PC-9 (cell line): ENCODE measurements at regions of chr9 and their contacts with region 1.

Region 1: GRCh38 chr9:12719431-12719830 is 26.2 kb downstream of the TYRP1 start:
- DNase-seq: no peak
- H3K4me3 ChIP-seq: no peak overlapping the region
- H3K27ac ChIP-seq: no peak overlapping the region
- H3K4me1 ChIP-seq: no peaks in the 10 kb centered on the region
- H3K27me3 ChIP-seq: no peaks in the 10 kb centered on the region
- CTCF ChIP-seq: peak; percentile 67

Region 2: GRCh38 chr9:12813960-12814876 is 94.8 kb after region 1 on chr9:
- CTCF ChIA-PET with region 1: interaction called, 6 read pairs
- POLR2A ChIA-PET with region 1: no interaction called
- intact Hi-C with region 1: loop called (anchors 5 kb)
- DNase-seq: peak; percentile 57 to 96
- H3K4me3 ChIP-seq: peak overlapping the region; percentile 38; the same call in 1 of the 2 replicates
- H3K27ac ChIP-seq: peak overlapping the region; percentile 100
- H3K4me1 ChIP-seq: peaks cover 33% of the 10 kb centered on the region
- H3K27me3 ChIP-seq: no peaks in the 10 kb centered on the region
- CTCF ChIP-seq: no peak

Region 3: DNA sequence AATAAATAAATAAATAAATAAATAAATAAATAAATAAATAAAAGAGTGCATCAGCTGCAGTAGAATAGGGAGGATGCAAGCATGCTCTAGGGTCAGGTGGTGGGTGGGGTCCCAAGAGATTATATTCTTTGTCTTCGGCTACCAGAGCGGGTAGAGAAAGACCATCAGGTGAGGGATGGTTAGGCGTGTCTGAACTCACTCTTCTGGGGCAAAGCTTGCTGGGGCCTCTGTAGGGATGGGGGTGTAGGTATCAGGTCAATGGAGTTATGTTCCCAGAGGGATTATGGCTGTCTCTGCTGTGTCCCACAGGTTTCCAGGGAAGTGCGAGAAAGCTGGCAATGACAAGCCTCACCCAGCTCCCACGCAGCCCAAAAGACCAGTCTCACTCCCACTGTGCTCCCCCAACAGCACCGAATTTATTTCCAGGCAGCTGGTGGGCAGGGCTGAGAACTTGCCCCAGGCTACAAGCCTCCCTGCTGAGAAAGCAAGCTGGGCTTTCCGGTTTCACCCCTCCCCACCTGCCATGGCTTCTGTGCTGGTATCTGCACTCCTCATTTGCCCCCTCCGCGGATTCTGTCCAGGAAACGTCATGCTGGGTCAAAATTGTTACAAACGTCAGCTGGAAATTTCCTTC is 236.2 kb after region 1 on chr9:
- CTCF ChIA-PET with region 1: interaction called, 14 read pairs
- POLR2A ChIA-PET with region 1: no interaction called
- intact Hi-C with region 1: no loop called
- DNase-seq: peak; percentile 61 to 75
- H3K4me3 ChIP-seq: peak overlapping the region; percentile 26; the same call in 1 of the 2 replicates
- H3K27ac ChIP-seq: peak overlapping the region; percentile 99
- H3K4me1 ChIP-seq: peaks cover 24% of the 10 kb centered on the region
- H3K27me3 ChIP-seq: no peaks in the 10 kb centered on the region
- CTCF ChIP-seq: no peak

Region 4: GRCh38 chr9:13033959-13034693 is 314.7 kb after region 1 on chr9:
- CTCF ChIA-PET with region 1: interaction called, 3 read pairs
- POLR2A ChIA-PET with region 1: no interaction called
- intact Hi-C with region 1: loop called (anchors 2 kb)
- DNase-seq: peak; percentile 37 to 57
- H3K4me3 ChIP-seq: peak overlapping the region; percentile 37; the same call in 1 of the 2 replicates
- H3K27ac ChIP-seq: no peak overlapping the region
- H3K4me1 ChIP-seq: no peaks in the 10 kb centered on the region
- H3K27me3 ChIP-seq: no peaks in the 10 kb centered on the region
- CTCF ChIP-seq: peak; percentile 75

Region 5: GRCh38 chr9:13427587-13427986 is 708.2 kb after region 1 on chr9:
- CTCF ChIA-PET with region 1: no interaction called
- POLR2A ChIA-PET with region 1: no interaction called
- intact Hi-C with region 1: loop called (anchors 5 kb)
- DNase-seq: peak in 1 of 2 experiments; percentile 5
- H3K4me3 ChIP-seq: no peak overlapping the region
- H3K27ac ChIP-seq: no peak overlapping the region
- H3K4me1 ChIP-seq: no peaks in the 10 kb centered on the region
- H3K27me3 ChIP-seq: no peaks in the 10 kb centered on the region
- CTCF ChIP-seq: peak; percentile 80